Left lung (tissue), 14 donors: ENCODE measurements at regions of chr17 and their contacts with region 1.

Region 1: DNA sequence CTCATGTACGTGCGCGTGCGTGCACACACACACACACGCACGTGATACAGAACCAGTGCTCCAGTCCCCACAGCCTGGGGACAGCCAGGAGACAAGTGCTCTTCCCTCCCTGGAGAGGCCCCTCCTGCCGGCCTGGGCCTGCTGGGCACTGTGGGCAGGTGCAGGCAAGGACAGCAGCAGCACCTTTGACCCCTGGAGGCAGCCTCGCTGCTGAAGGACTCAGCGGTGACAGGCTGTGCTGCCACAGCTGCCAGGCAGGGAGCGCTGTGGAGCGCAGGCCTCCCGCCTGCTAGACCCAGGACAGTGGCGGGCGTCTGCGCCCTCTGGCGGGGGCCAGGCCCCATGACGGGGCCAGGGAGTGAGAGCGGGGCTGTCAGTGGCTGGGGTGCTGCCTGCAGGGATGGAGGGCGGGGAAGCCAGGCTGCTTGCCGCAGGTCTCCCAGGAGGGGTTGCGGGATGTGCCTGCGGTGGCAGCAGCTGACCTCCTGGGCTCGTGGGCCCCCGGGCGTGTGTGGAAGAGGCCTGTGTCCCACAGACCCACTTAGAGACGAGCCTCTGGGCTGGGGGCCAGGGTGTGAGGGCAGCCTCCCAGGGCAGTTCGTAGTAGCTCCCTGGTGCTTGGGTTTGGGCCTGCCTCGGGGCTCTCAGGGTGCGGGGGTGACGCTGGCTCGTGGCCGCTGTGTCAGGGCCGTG is 63.5 kb upstream of the PVALEF start:
- DNase-seq: peak; percentile 42 to 98 (median 84)
- ATAC-seq: peak; percentile 86
- H3K4me3 ChIP-seq: no peak overlapping the region
- H3K27ac ChIP-seq: no peak overlapping the region
- H3K4me1 ChIP-seq: peaks cover 15 to 26% of the 10 kb centered on the region in 2 donors
- H3K27me3 ChIP-seq: no peaks in the 10 kb centered on the region
- CTCF ChIP-seq: peak; percentile 99 to 100

Region 2: GRCh38 chr17:80981062-80981902 is 120.5 kb before region 1 on chr17:
- intact Hi-C with region 1: loop called in 1 of 2 experiments (anchors 5 kb)
- DNase-seq: peak in 1 of 4 donors; percentile 81
- ATAC-seq: peak; percentile 36
- H3K4me3 ChIP-seq: no peak overlapping the region
- H3K27ac ChIP-seq: no peak overlapping the region
- H3K4me1 ChIP-seq: peaks cover 5 to 8% of the 10 kb centered on the region in 2 donors
- H3K27me3 ChIP-seq: peaks cover 0 to 24% of the 10 kb centered on the region in 2 donors
- CTCF ChIP-seq: peak; percentile 78 to 85